Activated CD4-positive, alpha-beta memory T cell treated with anti-CD3 and anti-CD28 coated beads for 36 hours (primary cell): ENCODE measurements at regions of chrX and their contacts with region 1.

Region 1: GRCh38 chrX:14872851-14873675 is at the starts of genes FANCB and MOSPD2:
- DNase-seq: peak; percentile 96
- H3K4me3 Mint-ChIP-seq: peak within 1 kb of the TSS; percentile 79
- H3K27ac Mint-ChIP-seq: peak within 1 kb of the TSS; percentile 80
- H3K4me1 Mint-ChIP-seq: peaks cover 15% of the 10 kb centered on the region
- H3K27me3 Mint-ChIP-seq: no peaks in the 10 kb centered on the region
- total RNA-seq, gene FANCB: 12.0 to 16.2 TPM
- total RNA-seq, gene MOSPD2: 12.6 to 13.7 TPM

Region 2: DNA sequence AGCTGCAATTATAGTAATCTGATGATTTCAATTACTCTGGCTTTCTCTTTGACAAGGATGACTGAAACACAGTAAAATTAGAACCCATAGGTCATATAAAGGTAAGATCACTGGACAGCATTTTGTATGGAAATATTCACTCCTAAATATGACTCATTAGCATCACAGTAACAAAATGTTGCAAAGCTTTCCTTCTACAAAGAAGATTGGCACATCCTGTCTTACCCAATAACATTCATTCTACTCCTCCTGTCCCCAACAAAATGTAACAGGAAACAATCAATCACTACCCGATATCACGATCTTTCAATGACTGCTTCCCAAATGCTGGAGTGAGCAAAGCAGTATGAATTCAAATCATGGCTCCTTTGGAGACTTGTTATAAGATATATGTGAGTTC is 95.5 kb before region 1 on chrX:
- CTCF ChIA-PET with region 1: no interaction called
- POLR2A ChIA-PET with region 1: no interaction called
- intact Hi-C with region 1: no loop called
- DNase-seq: no peak
- H3K4me3 Mint-ChIP-seq: no peak overlapping the region
- H3K27ac Mint-ChIP-seq: no peak overlapping the region
- H3K4me1 Mint-ChIP-seq: no peaks in the 10 kb centered on the region
- H3K27me3 Mint-ChIP-seq: no peaks in the 10 kb centered on the region

Region 3: GRCh38 chrX:14798805-14799397 is 74.2 kb before region 1 on chrX:
- CTCF ChIA-PET with region 1: no interaction called
- POLR2A ChIA-PET with region 1: no interaction called
- intact Hi-C with region 1: loop called (anchors 5 kb)
- DNase-seq: peak; percentile 12
- H3K4me3 Mint-ChIP-seq: no peak overlapping the region
- H3K27ac Mint-ChIP-seq: no peak overlapping the region
- H3K4me1 Mint-ChIP-seq: peaks cover 18% of the 10 kb centered on the region
- H3K27me3 Mint-ChIP-seq: peaks cover 2% of the 10 kb centered on the region

Region 4: GRCh38 chrX:14899607-14900006 is 26.5 kb after region 1 on chrX:
- CTCF ChIA-PET with region 1: no interaction called
- POLR2A ChIA-PET with region 1: no interaction called
- intact Hi-C with region 1: loop called (anchors 1 kb)
- DNase-seq: no peak
- H3K4me3 Mint-ChIP-seq: no peak overlapping the region
- H3K27ac Mint-ChIP-seq: no peak overlapping the region
- H3K4me1 Mint-ChIP-seq: peaks cover 3% of the 10 kb centered on the region
- H3K27me3 Mint-ChIP-seq: no peaks in the 10 kb centered on the region

Region 5: GRCh38 chrX:15014281-15014680 is 141.2 kb after region 1 on chrX:
- CTCF ChIA-PET with region 1: no interaction called
- POLR2A ChIA-PET with region 1: no interaction called
- intact Hi-C with region 1: loop called (anchors 10 kb)
- DNase-seq: no peak
- H3K4me3 Mint-ChIP-seq: no peak overlapping the region
- H3K27ac Mint-ChIP-seq: no peak overlapping the region
- H3K4me1 Mint-ChIP-seq: no peaks in the 10 kb centered on the region
- H3K27me3 Mint-ChIP-seq: no peaks in the 10 kb centered on the region

Region 6: GRCh38 chrX:15087747-15088146 is 214.7 kb after region 1 on chrX:
- CTCF ChIA-PET with region 1: no interaction called
- POLR2A ChIA-PET with region 1: no interaction called
- intact Hi-C with region 1: no loop called
- DNase-seq: no peak
- H3K4me3 Mint-ChIP-seq: no peak overlapping the region
- H3K27ac Mint-ChIP-seq: no peak overlapping the region
- H3K4me1 Mint-ChIP-seq: no peaks in the 10 kb centered on the region
- H3K27me3 Mint-ChIP-seq: no peaks in the 10 kb centered on the region

Region 7: DNA sequence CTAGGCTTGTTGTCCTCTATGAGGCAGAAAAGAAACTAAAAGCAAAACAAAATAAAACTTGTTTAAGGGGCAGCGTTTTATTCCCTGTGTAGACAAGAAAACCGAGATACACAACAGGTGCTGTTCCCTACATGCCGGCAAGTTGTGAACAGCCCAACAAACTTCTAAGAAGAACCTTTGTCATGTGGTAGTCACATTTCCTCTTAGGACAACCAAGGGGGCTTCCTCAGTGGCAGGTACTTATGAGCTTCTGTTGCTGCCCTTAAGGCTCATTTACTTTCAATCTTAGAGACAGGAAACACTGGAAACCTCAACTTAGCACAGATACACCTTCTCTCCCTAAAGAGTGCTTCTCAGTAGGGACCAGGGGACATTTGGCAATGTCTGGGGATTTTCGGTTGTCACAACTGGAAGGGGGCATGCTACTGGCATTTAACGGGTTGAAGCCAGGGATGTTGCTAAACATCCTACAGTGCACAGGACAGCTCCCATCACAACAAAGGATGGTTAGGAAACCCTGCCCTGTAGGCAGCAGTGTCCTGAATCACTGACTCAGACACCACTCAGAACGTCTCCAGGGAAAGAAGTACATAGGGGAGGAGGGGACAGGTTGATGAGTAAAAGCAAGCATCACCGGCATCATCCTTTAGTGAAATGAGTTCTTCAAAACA is 285.8 kb after region 1 on chrX:
- CTCF ChIA-PET with region 1: no interaction called
- POLR2A ChIA-PET with region 1: no interaction called
- intact Hi-C with region 1: loop called (anchors 2 kb)
- DNase-seq: peak; percentile 51
- H3K4me3 Mint-ChIP-seq: peak overlapping the region; percentile 57
- H3K27ac Mint-ChIP-seq: peak overlapping the region; percentile 70
- H3K4me1 Mint-ChIP-seq: peaks cover 34% of the 10 kb centered on the region
- H3K27me3 Mint-ChIP-seq: peaks cover 2% of the 10 kb centered on the region